ENCODE measurements at regions of chr7 and their contacts with region 1.

Region 1: GRCh38 chr7:25389489-25390106 is 161.3 kb upstream of the NPVF start:
- DNase-seq: no peak
- H3K4me3 ChIP-seq: no peak overlapping the region
- H3K27ac ChIP-seq: no peak overlapping the region
- H3K4me1 ChIP-seq: peaks cover 0 to 8% of the 10 kb centered on the region in 2 donors
- H3K27me3 ChIP-seq: no peaks in the 10 kb centered on the region
- CTCF ChIP-seq: peak in 1 of 3 experiments; percentile 49

Region 2: GRCh38 chr7:25259587-25260243 is 129.9 kb before region 1 on chr7:
- intact Hi-C with region 1: loop called (anchors 1 kb)
- DNase-seq: peak; percentile 9 to 82
- H3K4me3 ChIP-seq: no peak overlapping the region
- H3K27ac ChIP-seq: no peak overlapping the region
- H3K4me1 ChIP-seq: peaks cover 0 to 3% of the 10 kb centered on the region in 2 donors
- H3K27me3 ChIP-seq: no peaks in the 10 kb centered on the region
- CTCF ChIP-seq: peak; percentile 59 to 74 (median 71)

Region 3: DNA sequence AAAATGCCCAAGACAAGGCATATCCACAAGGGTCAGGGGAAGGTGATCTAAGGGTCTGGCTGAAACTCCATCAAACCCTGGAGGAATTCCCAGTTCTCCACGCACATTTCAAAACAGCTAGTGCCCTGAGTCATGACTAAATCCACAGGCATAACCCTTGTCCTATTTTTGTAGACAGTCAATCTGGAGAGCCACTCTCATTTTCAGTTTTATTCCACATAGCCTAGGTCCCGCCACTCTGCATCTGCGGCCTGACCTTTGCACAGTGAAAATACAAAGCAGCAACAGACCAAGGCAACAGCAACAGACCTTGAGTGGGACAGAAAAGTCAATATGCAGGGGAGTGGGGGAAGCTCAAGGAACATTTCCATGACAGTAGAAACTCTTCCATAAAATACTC is 40.1 kb after region 1 on chr7:
- intact Hi-C with region 1: no loop called
- DNase-seq: peak in 1 of 2 donors; percentile 65
- H3K4me3 ChIP-seq: no peak overlapping the region
- H3K27ac ChIP-seq: peak overlapping the region in 1 of 2 donors; percentile 49
- H3K4me1 ChIP-seq: peaks cover 0 to 15% of the 10 kb centered on the region in 2 donors
- H3K27me3 ChIP-seq: no peaks in the 10 kb centered on the region
- CTCF ChIP-seq: no peak

Region 4: GRCh38 chr7:25565949-25566348 is 176.4 kb after region 1 on chr7:
- intact Hi-C with region 1: loop called (anchors 1 kb)
- DNase-seq: peak in 1 of 2 donors; percentile 73
- H3K4me3 ChIP-seq: no peak overlapping the region
- H3K27ac ChIP-seq: no peak overlapping the region
- H3K4me1 ChIP-seq: no peaks in the 10 kb centered on the region
- H3K27me3 ChIP-seq: no peaks in the 10 kb centered on the region
- CTCF ChIP-seq: peak; percentile 92 to 99 (median 99)

Region 5: GRCh38 chr7:26193432-26194207 is 804.0 kb after region 1 on chr7:
- intact Hi-C with region 1: loop called (anchors 5 kb)
- DNase-seq: no peak
- H3K4me3 ChIP-seq: peak overlapping the region in 1 of 2 donors; percentile 13
- H3K27ac ChIP-seq: no peak overlapping the region
- H3K4me1 ChIP-seq: peaks cover 3 to 61% of the 10 kb centered on the region in 2 donors
- H3K27me3 ChIP-seq: no peaks in the 10 kb centered on the region
- CTCF ChIP-seq: no peak

Measured in ascending aorta (tissue), 2 donors.